Left cardiac atrium (tissue), 4 donors: ENCODE measurements at regions of chr11 and their contacts with region 1.

Region 1: GRCh38 chr11:11416502-11416901 is 63.5 kb upstream of the CSNK2A3 start:
- DNase-seq: peak; percentile 44
- ATAC-seq: peak; percentile 27 to 37

Region 2: GRCh38 chr11:11163236-11163635 is 253.3 kb before region 1 on chr11:
- intact Hi-C with region 1: no loop called
- DNase-seq: no peak
- ATAC-seq: peak in 1 of 2 donors; percentile 19

Region 3: GRCh38 chr11:11787305-11788062 is 371.0 kb after region 1 on chr11:
- intact Hi-C with region 1: loop called in 1 of 2 experiments (anchors 10 kb)
- DNase-seq: peak; percentile 71
- ATAC-seq: peak; percentile 93